MCF 10A (cell line): ENCODE measurements at regions of chr9 and their contacts with region 1.

Region 1: GRCh38 chr9:6106576-6107339 is 91.3 kb upstream of the RANBP6 start:
- DNase-seq: peak; percentile 61
- H3K4me3 Mint-ChIP-seq: no peak overlapping the region
- H3K27ac Mint-ChIP-seq: no peak overlapping the region
- H3K4me1 Mint-ChIP-seq: peaks cover 35% of the 10 kb centered on the region
- H3K27me3 Mint-ChIP-seq: no peaks in the 10 kb centered on the region
- CTCF ChIP-seq: peak; percentile 40

Region 2: DNA sequence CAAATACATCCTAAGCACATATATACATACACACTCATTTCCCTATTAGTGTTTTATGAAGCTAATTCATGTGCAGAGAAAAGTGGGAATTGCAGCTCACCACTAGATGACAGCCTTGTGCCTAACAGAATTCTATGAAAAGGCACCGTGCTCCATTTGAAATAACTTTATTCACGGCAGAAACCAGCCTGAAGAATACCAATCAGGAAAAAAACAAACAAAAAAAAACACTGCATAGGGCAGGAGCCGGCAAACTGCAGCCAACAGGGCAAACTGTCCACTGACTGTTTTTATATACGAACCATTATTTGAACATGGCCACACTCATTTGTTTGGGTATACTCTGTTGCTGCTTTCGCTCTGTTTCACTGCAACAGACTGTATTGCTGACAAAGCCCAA is 307.4 kb before region 1 on chr9:
- CTCF ChIA-PET with region 1: no interaction called
- POLR2A ChIA-PET with region 1: no interaction called
- intact Hi-C with region 1: loop called (anchors 2 kb)
- DNase-seq: peak; percentile 55
- H3K4me3 Mint-ChIP-seq: no peak overlapping the region
- H3K27ac Mint-ChIP-seq: no peak overlapping the region
- H3K4me1 Mint-ChIP-seq: peaks cover 6% of the 10 kb centered on the region
- H3K27me3 Mint-ChIP-seq: no peaks in the 10 kb centered on the region
- CTCF ChIP-seq: peak; percentile 70

Region 3: DNA sequence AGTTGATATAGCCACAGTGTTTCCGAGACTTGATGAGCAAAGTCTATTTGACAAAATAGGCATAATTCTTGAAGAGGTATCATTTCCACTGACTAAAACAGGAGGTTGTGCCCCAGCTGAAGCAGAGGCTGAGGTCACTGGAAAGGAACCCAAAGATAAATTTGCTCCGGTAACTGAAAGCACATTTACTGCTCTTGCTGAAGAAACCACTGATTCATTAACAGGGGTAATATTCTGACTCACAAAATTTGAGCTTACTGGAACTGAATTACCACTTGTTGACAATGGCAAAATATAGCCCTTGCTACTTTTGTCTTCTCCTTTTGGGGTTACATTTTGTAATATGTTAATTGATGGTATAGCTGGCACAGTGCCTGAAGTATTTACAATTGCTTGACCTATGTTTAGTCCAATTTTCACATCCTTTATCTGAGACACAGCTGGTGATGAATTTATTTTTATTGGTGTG is 185.9 kb before region 1 on chr9:
- CTCF ChIA-PET with region 1: no interaction called
- POLR2A ChIA-PET with region 1: no interaction called
- intact Hi-C with region 1: no loop called
- DNase-seq: no peak
- H3K4me3 Mint-ChIP-seq: no peak overlapping the region
- H3K27ac Mint-ChIP-seq: no peak overlapping the region
- H3K4me1 Mint-ChIP-seq: no peaks in the 10 kb centered on the region
- H3K27me3 Mint-ChIP-seq: no peaks in the 10 kb centered on the region
- CTCF ChIP-seq: no peak

Region 4: GRCh38 chr9:6123416-6123815 is 16.7 kb after region 1 on chr9:
- CTCF ChIA-PET with region 1: interaction called, 11 read pairs
- POLR2A ChIA-PET with region 1: no interaction called
- intact Hi-C with region 1: no loop called
- DNase-seq: no peak
- H3K4me3 Mint-ChIP-seq: no peak overlapping the region
- H3K27ac Mint-ChIP-seq: no peak overlapping the region
- H3K4me1 Mint-ChIP-seq: no peaks in the 10 kb centered on the region
- H3K27me3 Mint-ChIP-seq: no peaks in the 10 kb centered on the region
- CTCF ChIP-seq: no peak